Cardiac septum (tissue), 1 donor: ENCODE measurements at regions of chr4 and their contacts with region 1.

Region 1: GRCh38 chr4:173420324-173420752 is 21.4 kb upstream of the SCRG1 start:
- DNase-seq: no peak

Region 2: GRCh38 chr4:173318648-173319211 is 101.6 kb before region 1 on chr4:
- intact Hi-C with region 1: loop called (anchors 1 kb)
- DNase-seq: no peak